ENCODE measurements at regions of chr3 and their contacts with region 1.

Region 1: GRCh38 chr3:148861277-148861869 is 3.7 kb upstream of the CPA3 start:
- DNase-seq: peak; percentile 50
- CTCF ChIP-seq: peak; percentile 57

Region 2: GRCh38 chr3:148943506-148944205 is 82.3 kb after region 1 on chr3:
- in situ Hi-C with region 1: loop called (anchors 10 kb)
- DNase-seq: peak; percentile 73
- CTCF ChIP-seq: peak; percentile 58

Measured in GM13976 (cell line).